Calu3 (cell line): ENCODE measurements at regions of chr12 and their contacts with region 1.

Region 1: GRCh38 chr12:56359851-56360767 is at the start of gene STAT2:
- DNase-seq: peak; percentile 99
- H3K4me3 Mint-ChIP-seq: peak within 1 kb of the TSS; percentile 89
- H3K27ac Mint-ChIP-seq: peak within 1 kb of the TSS; percentile 63
- H3K4me1 Mint-ChIP-seq: peaks cover 8% of the 10 kb centered on the region
- H3K27me3 Mint-ChIP-seq: no peaks in the 10 kb centered on the region
- CTCF ChIP-seq: no peak
- total RNA-seq, gene STAT2: 127 and 214 TPM in 2 replicates

Region 2: GRCh38 chr12:56078990-56079664 is 281.0 kb before region 1 on chr12:
- CTCF ChIA-PET with region 1: no interaction called
- intact Hi-C with region 1: no loop called
- DNase-seq: peak; percentile 98
- H3K4me3 Mint-ChIP-seq: peak overlapping the region; percentile 99
- H3K27ac Mint-ChIP-seq: peak overlapping the region; percentile 95
- H3K4me1 Mint-ChIP-seq: peaks cover 21% of the 10 kb centered on the region
- H3K27me3 Mint-ChIP-seq: no peaks in the 10 kb centered on the region
- CTCF ChIP-seq: peak; percentile 66

Region 3: GRCh38 chr12:56315622-56316473 is 44.3 kb before region 1 on chr12 and contains the start of gene CNPY2:
- CTCF ChIA-PET with region 1: interaction called, 12 read pairs
- intact Hi-C with region 1: no loop called
- DNase-seq: peak; percentile 98
- H3K4me3 Mint-ChIP-seq: peak within 1 kb of the TSS; percentile 100
- H3K27ac Mint-ChIP-seq: peak within 1 kb of the TSS; percentile 99
- H3K4me1 Mint-ChIP-seq: no peaks in the 10 kb centered on the region
- H3K27me3 Mint-ChIP-seq: no peaks in the 10 kb centered on the region
- CTCF ChIP-seq: no peak
- total RNA-seq, gene CNPY2: 228 and 236 TPM in 2 replicates

Region 4: GRCh38 chr12:56346703-56347102 is 13.4 kb before region 1 on chr12:
- CTCF ChIA-PET with region 1: interaction called, 12 read pairs
- intact Hi-C with region 1: no loop called
- DNase-seq: no peak
- H3K4me3 Mint-ChIP-seq: no peak overlapping the region
- H3K27ac Mint-ChIP-seq: no peak overlapping the region
- H3K4me1 Mint-ChIP-seq: no peaks in the 10 kb centered on the region
- H3K27me3 Mint-ChIP-seq: no peaks in the 10 kb centered on the region
- CTCF ChIP-seq: no peak

Region 5: DNA sequence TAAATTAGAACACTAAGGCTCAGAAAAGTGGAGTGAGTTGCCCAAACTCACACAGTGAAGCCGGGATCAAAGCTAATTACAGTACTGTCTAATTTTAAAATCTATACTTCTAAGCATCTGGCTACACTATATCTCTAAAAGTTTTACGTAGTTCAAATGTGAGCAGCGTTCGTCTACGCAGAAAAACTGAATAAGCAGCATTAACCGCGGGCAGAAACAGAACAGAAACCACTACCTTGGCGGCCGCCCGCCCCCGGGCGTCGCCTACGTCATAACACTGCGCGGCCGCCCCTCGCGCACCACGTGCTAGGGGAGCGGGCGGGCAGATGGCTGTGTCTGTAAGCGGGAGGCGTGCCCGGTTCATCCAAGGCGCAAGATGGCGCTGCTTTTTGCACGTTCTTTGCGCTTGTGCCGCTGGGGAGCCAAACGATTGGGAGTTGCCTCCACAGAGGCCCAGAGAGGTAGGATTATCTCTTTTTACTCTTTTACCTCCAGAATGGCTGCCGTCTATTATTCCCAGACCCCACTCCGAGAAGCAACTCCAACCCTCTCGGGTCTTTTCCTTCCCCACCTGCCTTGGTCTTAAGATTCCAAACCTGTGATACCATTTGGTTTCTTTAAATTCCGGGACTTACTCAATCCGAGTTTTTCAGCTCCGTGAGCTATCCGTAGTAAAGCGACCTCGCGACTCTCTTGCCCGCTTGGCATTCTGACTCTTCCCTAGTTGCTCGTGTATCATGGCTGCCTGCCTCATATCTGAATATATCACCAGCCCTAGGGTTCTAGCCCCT is 108.3 kb after region 1 on chr12 and contains the start of gene SPRYD4:
- CTCF ChIA-PET with region 1: interaction called, 20 read pairs
- intact Hi-C with region 1: loop called (anchors 10 kb)
- DNase-seq: peak; percentile 96
- H3K4me3 Mint-ChIP-seq: peak within 1 kb of the TSS; percentile 89
- H3K27ac Mint-ChIP-seq: peak within 1 kb of the TSS; percentile 96
- H3K4me1 Mint-ChIP-seq: peaks cover 9% of the 10 kb centered on the region
- H3K27me3 Mint-ChIP-seq: no peaks in the 10 kb centered on the region
- CTCF ChIP-seq: no peak
- total RNA-seq, gene SPRYD4: 6.1 and 6.6 TPM in 2 replicates